ENCODE measurements at regions of chr2 and their contacts with region 1.

Region 1: GRCh38 chr2:27807476-27807875 is 36.0 kb downstream of the MRPL33 start:
- DNase-seq: no peak
- H3K4me3 ChIP-seq: no peak overlapping the region
- H3K27ac ChIP-seq: no peak overlapping the region
- H3K4me1 ChIP-seq: peaks cover 11 to 26% (median 12%) of the 10 kb centered on the region in 4 donors
- H3K27me3 ChIP-seq: no peaks in the 10 kb centered on the region
- CTCF ChIP-seq: peak; percentile 39 to 61 (median 52)
- EP300 ChIP-seq: no peak
- POLR2A ChIP-seq: no peak

Region 2: DNA sequence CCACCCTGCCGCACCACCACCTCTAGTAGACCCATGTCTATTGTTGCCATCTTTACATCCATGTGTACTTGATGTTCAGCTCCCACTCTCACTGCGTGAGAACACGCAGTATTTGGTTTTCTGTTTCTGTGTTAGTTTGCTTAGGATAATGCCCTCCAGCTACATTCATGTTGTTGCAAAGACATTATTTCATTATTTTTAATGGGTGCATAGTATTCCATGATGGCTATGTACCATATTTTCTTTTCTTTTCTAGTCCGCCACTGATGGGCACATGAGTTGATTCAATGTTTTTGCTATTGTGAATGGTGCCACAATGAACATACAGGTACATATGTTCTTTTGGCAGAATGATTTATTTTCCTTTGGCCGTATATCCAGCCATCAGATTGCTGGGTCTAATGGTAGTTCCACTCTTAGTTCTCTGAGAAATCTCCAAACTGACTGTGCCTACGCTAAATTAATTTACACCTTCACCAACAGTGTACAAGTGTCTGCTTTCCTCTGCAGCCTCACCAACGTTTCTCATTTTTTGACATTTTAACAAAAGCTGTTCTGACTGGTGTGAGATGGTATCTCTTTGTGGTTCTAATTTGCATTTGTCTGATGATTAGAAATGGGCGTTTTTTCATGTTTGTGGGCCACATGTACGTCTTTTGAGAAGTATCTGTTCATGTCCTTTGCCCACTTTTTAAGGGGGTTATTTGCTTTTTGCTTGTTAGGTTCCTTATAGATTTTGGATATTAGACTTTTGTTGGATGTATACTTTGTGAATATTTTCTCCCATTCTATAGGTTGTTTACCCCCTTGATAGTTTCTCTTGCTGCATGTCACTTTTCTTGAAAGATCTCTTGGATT is 416.4 kb before region 1 on chr2:
- intact Hi-C with region 1: no loop called
- DNase-seq: no peak
- H3K4me3 ChIP-seq: no peak overlapping the region
- H3K27ac ChIP-seq: no peak overlapping the region
- H3K4me1 ChIP-seq: no peaks in the 10 kb centered on the region
- H3K27me3 ChIP-seq: no peaks in the 10 kb centered on the region
- CTCF ChIP-seq: no peak
- EP300 ChIP-seq: no peak
- POLR2A ChIP-seq: no peak

Region 3: GRCh38 chr2:27737676-27738348 is 69.7 kb before region 1 on chr2:
- intact Hi-C with region 1: no loop called
- DNase-seq: no peak
- H3K4me3 ChIP-seq: no peak overlapping the region
- H3K27ac ChIP-seq: peak overlapping the region; percentile 82 to 85 (median 84)
- H3K4me1 ChIP-seq: peaks cover 27 to 39% (median 33%) of the 10 kb centered on the region in 4 donors
- H3K27me3 ChIP-seq: no peaks in the 10 kb centered on the region
- CTCF ChIP-seq: no peak
- EP300 ChIP-seq: no peak
- POLR2A ChIP-seq: no peak

Region 4: DNA sequence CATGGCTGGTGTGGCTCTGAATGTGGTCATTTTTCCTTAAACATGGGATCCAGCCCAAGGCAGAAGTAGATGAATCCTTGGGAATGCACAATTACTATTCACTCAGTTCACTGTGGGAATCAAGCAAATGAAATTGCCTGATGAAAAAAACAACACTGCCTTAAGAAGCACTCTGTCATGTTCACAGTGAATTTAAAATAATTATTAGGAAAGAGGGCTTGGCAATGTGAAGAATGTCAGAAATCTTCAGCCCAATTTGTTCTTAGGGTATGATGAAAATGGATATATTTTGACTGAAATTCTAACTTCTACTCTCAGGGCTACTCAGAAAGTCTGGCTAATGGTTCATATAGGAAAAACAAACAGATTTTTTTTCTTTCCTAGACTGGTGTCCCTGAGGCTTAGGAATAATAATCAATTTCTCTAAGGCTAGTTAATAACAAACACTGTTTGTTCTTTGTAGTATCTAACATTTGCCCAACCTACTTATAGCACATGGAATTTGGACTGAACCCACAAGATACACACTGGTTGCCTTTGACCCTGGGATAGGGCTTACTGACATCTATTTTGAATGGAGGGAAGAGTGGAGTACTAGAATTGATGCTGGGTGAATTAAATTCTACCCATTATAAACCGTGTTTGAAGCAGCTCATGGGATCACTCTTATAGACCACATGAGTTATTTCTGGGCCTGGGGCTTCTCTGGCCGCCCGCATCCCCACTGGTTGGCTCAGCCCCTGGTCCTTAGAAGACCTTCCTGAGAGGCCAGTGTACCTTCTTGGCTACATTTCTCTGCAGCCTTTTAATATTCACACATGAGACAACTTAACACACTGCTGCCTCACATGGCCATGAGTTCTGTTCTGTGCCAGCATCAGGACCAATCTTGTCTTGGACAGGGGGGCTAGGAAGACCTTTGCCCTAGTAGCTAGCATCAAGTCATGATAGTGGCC is 44.2 kb before region 1 on chr2:
- intact Hi-C with region 1: loop called (anchors 5 kb)
- DNase-seq: peak; percentile 10
- H3K4me3 ChIP-seq: no peak overlapping the region
- H3K27ac ChIP-seq: peak overlapping the region in 1 of 4 donors; percentile 32
- H3K4me1 ChIP-seq: peaks cover 4 to 10% (median 8%) of the 10 kb centered on the region in 4 donors
- H3K27me3 ChIP-seq: no peaks in the 10 kb centered on the region
- CTCF ChIP-seq: no peak
- EP300 ChIP-seq: no peak
- POLR2A ChIP-seq: no peak

Region 5: DNA sequence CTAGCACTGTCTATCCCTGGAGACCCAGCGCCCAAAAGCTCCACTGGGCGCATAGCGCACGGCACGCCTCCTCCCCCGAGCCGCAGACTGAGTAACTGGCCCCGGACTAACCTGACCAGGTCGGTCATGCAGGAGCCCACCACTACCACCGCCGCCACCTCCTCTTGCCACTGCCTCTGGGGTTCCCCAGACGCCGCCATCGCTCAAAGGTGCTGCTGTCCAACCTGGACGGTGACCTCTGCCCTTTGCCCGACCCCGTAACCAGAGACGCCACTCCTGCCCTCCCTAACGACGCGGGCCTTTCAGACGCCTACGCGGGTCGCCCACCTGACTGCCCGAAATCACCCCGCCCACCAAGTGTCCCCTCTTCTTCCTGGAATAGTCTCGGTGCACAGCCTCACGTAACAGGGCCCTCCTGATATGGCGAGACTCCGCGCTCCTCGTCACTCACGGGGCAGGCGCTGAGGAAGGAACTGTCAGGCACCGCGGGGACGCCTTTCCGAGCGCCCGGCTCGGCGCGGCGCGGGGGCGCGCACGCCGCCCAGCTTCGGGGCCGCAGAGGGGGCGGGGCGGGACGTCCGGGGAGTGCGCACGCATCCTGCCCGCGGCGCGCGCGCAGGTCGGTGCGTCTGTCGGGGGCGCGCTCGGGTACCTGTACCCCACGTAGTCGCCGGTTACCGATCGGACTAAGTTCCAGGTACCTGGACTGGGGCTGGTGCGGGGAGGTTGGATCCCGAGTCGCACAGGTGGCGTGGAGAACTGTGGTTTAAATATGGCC is 82.9 kb after region 1 on chr2 and contains the starts of genes BABAM2 and RBKS:
- intact Hi-C with region 1: loop called (anchors 5 kb)
- DNase-seq: peak; percentile 95
- H3K4me3 ChIP-seq: peak within 1 kb of the TSS; percentile 69 to 83 (median 74)
- H3K27ac ChIP-seq: peak within 1 kb of the TSS; percentile 89 to 97 (median 91)
- H3K4me1 ChIP-seq: peaks cover 20 to 39% (median 38%) of the 10 kb centered on the region in 4 donors
- H3K27me3 ChIP-seq: no peaks in the 10 kb centered on the region
- CTCF ChIP-seq: no peak
- EP300 ChIP-seq: peak; percentile 88
- POLR2A ChIP-seq: peak; percentile 88
- total RNA-seq, gene BABAM2: 35.5 to 44.9 (median 39.9) TPM
- total RNA-seq, gene RBKS: 0.63 to 5.8 (median 2.5) TPM

Measured in esophagus muscularis mucosa (tissue), 4 donors.